Panc1 (cell line): ENCODE measurements at regions of chr15 and their contacts with region 1.

Region 1: DNA sequence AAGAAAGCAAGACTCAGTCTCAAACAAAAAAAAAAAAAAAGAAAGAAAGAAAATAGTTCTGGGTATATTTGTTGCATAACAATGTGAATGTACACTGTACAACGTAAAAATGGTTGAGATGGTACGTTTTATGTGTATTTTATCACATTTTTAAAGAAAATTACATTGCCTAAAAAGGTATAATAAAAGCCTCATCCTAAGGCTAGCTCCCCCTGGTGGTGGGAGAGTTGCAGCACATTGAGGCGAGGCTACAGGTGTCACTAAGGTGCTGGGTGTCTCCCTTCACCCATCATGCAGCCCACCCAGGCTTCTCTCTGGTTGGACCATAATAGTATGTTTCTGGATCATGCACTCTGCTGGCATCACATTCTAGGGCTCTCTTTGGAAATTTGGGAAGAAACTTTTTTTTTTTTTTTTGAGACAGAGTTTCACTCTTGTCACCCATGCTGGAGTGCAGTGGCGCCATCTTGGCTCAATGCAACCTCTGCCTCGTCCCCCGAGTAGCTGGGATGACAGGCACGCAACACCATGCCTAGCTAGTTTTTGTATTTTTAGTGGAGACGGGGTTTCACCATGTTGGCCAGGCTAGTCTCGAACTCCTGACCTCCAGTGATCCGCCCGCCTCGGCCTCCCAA is 12.4 kb upstream of the RAB11A start:
- DNase-seq: no peak
- ATAC-seq: peak; percentile 84
- H3K4me3 ChIP-seq: no peak overlapping the region
- H3K27ac ChIP-seq: no peak overlapping the region
- H3K4me1 ChIP-seq: no peaks in the 10 kb centered on the region
- H3K27me3 ChIP-seq: no peaks in the 10 kb centered on the region
- CTCF ChIP-seq: peak; percentile 95

Region 2: GRCh38 chr15:65791335-65792129 is 65.4 kb before region 1 on chr15:
- CTCF ChIA-PET with region 1: interaction called, 6 read pairs
- POLR2A ChIA-PET with region 1: interaction called, 25 read pairs
- in situ Hi-C with region 1: no loop called
- intact Hi-C with region 1: no loop called
- DNase-seq: no peak
- ATAC-seq: peak; percentile 63
- H3K4me3 ChIP-seq: peak overlapping the region; percentile 79 to 93
- H3K27ac ChIP-seq: peak overlapping the region; percentile 65
- H3K4me1 ChIP-seq: peaks cover 28% of the 10 kb centered on the region
- H3K27me3 ChIP-seq: no peaks in the 10 kb centered on the region
- CTCF ChIP-seq: no peak

Region 3: GRCh38 chr15:65832549-65833364 is 24.2 kb before region 1 on chr15:
- CTCF ChIA-PET with region 1: interaction called, 5 read pairs
- POLR2A ChIA-PET with region 1: interaction called, 10 read pairs
- in situ Hi-C with region 1: no loop called
- intact Hi-C with region 1: no loop called
- DNase-seq: peak; percentile 96
- ATAC-seq: peak; percentile 98
- H3K4me3 ChIP-seq: peak overlapping the region; percentile 14 to 31
- H3K27ac ChIP-seq: peak overlapping the region; percentile 72
- H3K4me1 ChIP-seq: peaks cover 19% of the 10 kb centered on the region
- H3K27me3 ChIP-seq: no peaks in the 10 kb centered on the region
- CTCF ChIP-seq: peak; percentile 48

Region 4: GRCh38 chr15:66261056-66261455 is 404.1 kb after region 1 on chr15:
- CTCF ChIA-PET with region 1: interaction called, 10 read pairs
- POLR2A ChIA-PET with region 1: no interaction called
- in situ Hi-C with region 1: no loop called
- intact Hi-C with region 1: no loop called
- DNase-seq: no peak
- ATAC-seq: no peak
- H3K4me3 ChIP-seq: no peak overlapping the region
- H3K27ac ChIP-seq: no peak overlapping the region
- H3K4me1 ChIP-seq: no peaks in the 10 kb centered on the region
- H3K27me3 ChIP-seq: peaks cover 10% of the 10 kb centered on the region; the same call in 1 of the 2 replicates
- CTCF ChIP-seq: no peak